Natural killer cell (primary cell): ENCODE measurements at regions of chr11 and their contacts with region 1.

Region 1: DNA sequence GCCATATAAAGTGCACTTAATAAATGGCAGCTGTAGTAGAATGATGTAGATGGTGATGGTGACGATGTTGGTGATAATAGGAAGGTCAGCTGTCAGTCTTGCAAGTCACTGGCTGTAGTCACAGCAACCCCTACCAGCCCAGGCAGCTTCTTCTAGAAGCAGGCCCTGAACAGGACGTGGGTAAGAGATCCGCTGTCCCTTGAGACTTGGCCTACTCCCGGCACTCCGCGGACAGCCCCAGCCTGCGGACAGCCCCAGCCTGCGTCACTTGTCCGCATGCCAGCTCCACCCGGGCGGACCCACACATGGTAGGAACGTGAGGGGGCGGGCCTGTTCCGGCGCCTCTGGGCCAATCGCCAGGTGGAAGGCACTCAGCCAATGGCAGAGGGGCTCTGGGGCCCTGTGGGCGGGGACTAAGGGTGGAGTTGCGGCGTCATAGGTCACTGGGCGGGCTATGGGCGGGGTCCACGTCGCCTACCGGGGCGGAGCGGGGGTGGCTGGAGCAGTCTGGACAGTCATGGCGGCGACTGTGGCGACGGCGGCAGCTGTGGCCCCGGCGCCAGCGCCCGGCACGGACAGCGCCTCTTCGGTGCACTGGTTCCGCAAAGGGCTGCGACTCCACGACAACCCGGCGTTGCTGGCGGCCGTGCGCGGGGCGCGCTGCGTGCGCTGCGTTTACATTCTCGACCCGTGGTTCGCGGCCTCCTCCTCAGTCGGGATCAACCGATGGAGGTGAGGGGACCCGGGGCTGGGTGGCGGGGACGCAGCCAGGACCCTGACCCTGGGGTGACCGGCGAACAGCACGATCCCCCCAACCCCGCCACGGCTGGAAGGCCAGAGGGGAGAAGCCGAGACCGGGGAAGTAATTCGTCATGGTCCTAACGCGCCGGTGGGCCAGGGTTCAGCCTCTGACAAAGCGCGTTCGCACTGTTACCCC is at the start of gene CRY2:
- DNase-seq: peak; percentile 98
- ATAC-seq: peak; percentile 80 to 94 (median 83)
- H3K4me3 ChIP-seq: peak within 1 kb of the TSS; percentile 82
- H3K4me3 Mint-ChIP-seq: peak within 1 kb of the TSS; percentile 90
- H3K27ac ChIP-seq: peak within 1 kb of the TSS; percentile 97
- H3K27ac Mint-ChIP-seq: peak within 1 kb of the TSS; percentile 96 to 98
- H3K4me1 ChIP-seq: peaks cover 24% of the 10 kb centered on the region
- H3K4me1 Mint-ChIP-seq: peaks cover 40 to 51% of the 10 kb centered on the region in 2 donors
- H3K27me3 ChIP-seq: no peaks in the 10 kb centered on the region
- H3K27me3 Mint-ChIP-seq: no peaks in the 10 kb centered on the region
- CTCF ChIP-seq: no peak
- total RNA-seq, gene CRY2: 124 to 214 (median 141) TPM

Region 2: DNA sequence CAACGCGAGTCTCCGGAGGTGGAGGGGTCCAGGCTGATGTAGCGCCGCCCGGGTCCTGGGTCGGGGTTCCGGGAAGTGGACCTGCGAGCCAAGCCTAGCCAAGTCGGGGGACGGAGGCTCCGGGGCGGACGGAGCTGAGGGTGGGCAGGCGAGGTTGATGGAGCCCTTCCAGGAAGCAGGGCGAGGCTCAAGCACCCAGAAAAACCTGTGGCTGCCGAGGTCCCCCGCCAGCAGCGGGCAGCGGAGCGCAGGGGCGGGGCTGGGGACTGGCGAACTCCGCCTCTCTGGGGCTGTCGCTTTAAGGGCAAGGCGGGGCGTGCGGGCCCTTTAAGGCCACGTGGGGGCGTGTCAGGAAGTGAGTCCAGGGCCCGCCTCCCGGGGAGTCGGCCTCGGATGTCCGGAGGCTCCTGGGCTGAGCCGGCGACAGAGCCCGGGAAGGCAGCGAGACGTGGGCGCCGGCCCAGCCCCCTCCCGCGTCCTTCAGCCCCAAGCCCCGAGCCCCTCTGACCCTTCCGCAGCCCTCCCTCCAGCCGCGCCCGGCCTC is 42.4 kb before region 1 on chr11 and contains the start of gene SLC35C1:
- intact Hi-C with region 1: loop called (anchors 1 kb)
- DNase-seq: peak; percentile 95 to 97
- ATAC-seq: peak; percentile 97 to 99 (median 98)
- H3K4me3 ChIP-seq: peak within 1 kb of the TSS; percentile 99
- H3K4me3 Mint-ChIP-seq: peak within 1 kb of the TSS; percentile 94
- H3K27ac ChIP-seq: peak within 1 kb of the TSS; percentile 86
- H3K27ac Mint-ChIP-seq: peak within 1 kb of the TSS; percentile 74 to 94
- H3K4me1 ChIP-seq: peaks cover 38% of the 10 kb centered on the region
- H3K4me1 Mint-ChIP-seq: peaks cover 37 to 53% of the 10 kb centered on the region in 2 donors
- H3K27me3 ChIP-seq: no peaks in the 10 kb centered on the region
- H3K27me3 Mint-ChIP-seq: no peaks in the 10 kb centered on the region
- CTCF ChIP-seq: no peak
- total RNA-seq, gene SLC35C1: 7.1 to 11.9 (median 9.5) TPM

Region 3: DNA sequence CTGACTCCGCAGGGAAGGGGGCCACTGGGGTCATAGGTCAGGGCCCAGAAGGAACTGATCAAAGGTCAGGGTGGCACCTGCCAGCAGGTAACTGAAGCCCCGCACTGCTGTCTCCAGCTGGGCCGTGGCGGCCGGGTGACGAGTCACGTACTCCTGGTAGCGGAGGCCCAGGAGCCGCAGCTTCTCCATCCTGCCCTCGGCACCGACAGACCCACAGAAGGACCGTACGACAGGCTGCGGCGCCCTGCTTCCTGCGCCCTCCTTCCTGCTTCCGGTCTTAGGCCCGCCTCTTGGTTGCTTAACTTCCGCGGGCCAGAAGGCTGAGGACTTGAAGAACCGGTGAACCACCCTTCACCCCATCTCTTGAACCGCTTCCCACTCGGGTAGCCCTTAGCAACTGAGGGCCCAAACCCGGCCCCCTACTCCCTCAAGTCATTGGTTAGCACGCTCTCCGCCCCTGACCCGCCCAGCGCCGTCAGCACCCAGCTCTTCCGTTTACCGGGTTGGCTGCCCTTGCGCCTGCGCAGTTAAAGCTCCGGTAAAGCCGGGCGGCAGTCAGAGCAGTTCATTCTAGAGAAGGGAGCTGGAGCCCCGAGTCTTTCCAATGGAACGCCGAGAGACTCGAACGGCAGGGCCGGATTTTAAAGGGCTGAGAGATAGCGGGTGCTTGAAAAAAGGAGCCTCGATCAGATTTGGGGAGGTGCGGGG is 70.5 kb after region 1 on chr11 and contains the start of gene PEX16:
- intact Hi-C with region 1: loop called (anchors 1 kb)
- DNase-seq: peak; percentile 92 to 99
- ATAC-seq: peak; percentile 88 to 97 (median 92)
- H3K4me3 ChIP-seq: peak within 1 kb of the TSS; percentile 85
- H3K4me3 Mint-ChIP-seq: peak within 1 kb of the TSS; percentile 97
- H3K27ac ChIP-seq: peak within 1 kb of the TSS; percentile 91
- H3K27ac Mint-ChIP-seq: peak within 1 kb of the TSS; percentile 96
- H3K4me1 ChIP-seq: peaks cover 52% of the 10 kb centered on the region
- H3K4me1 Mint-ChIP-seq: peaks cover 30 to 43% of the 10 kb centered on the region in 2 donors
- H3K27me3 ChIP-seq: peaks cover 3% of the 10 kb centered on the region
- H3K27me3 Mint-ChIP-seq: peaks cover 0 to 4% of the 10 kb centered on the region in 2 donors
- CTCF ChIP-seq: no peak
- total RNA-seq, gene PEX16: 61.3 to 75.8 (median 67.6) TPM

Region 4: GRCh38 chr11:46006418-46007070 is 159.3 kb after region 1 on chr11:
- intact Hi-C with region 1: loop called (anchors 5 kb)
- DNase-seq: peak in 1 of 2 donors; percentile 78
- ATAC-seq: peak; percentile 79 to 87 (median 83)
- H3K4me3 ChIP-seq: no peak overlapping the region
- H3K4me3 Mint-ChIP-seq: no peak overlapping the region
- H3K27ac ChIP-seq: no peak overlapping the region
- H3K27ac Mint-ChIP-seq: peak overlapping the region; percentile 6 to 67
- H3K4me1 ChIP-seq: no peaks in the 10 kb centered on the region
- H3K4me1 Mint-ChIP-seq: peaks cover 18 to 21% of the 10 kb centered on the region in 2 donors
- H3K27me3 ChIP-seq: no peaks in the 10 kb centered on the region
- H3K27me3 Mint-ChIP-seq: no peaks in the 10 kb centered on the region
- CTCF ChIP-seq: peak; percentile 71

Region 5: GRCh38 chr11:46121724-46122477 is 274.7 kb after region 1 on chr11:
- intact Hi-C with region 1: loop called (anchors 5 kb)
- DNase-seq: peak; percentile 67 to 91
- ATAC-seq: peak; percentile 43 to 72 (median 60)
- H3K4me3 ChIP-seq: peak overlapping the region; percentile 47
- H3K4me3 Mint-ChIP-seq: peak overlapping the region; percentile 93
- H3K27ac ChIP-seq: peak overlapping the region; percentile 64
- H3K27ac Mint-ChIP-seq: peak overlapping the region; percentile 97 to 99
- H3K4me1 ChIP-seq: peaks cover 11% of the 10 kb centered on the region
- H3K4me1 Mint-ChIP-seq: peaks cover 32 to 35% of the 10 kb centered on the region in 2 donors
- H3K27me3 ChIP-seq: no peaks in the 10 kb centered on the region
- H3K27me3 Mint-ChIP-seq: no peaks in the 10 kb centered on the region
- CTCF ChIP-seq: no peak